ENCODE measurements at regions of chr4 and their contacts with region 1.

Region 1: GRCh38 chr4:36081185-36081584 is 163.1 kb downstream of the ARAP2 start:
- DNase-seq: no peak
- H3K4me3 ChIP-seq: no peak overlapping the region
- H3K27ac ChIP-seq: no peak overlapping the region
- H3K4me1 ChIP-seq: no peaks in the 10 kb centered on the region
- H3K27me3 ChIP-seq: no peaks in the 10 kb centered on the region
- CTCF ChIP-seq: no peak
- POLR2A ChIP-seq: no peak

Region 2: GRCh38 chr4:36414248-36414647 is 333.1 kb after region 1 on chr4:
- intact Hi-C with region 1: loop called (anchors 10 kb)
- DNase-seq: no peak
- H3K4me3 ChIP-seq: no peak overlapping the region
- H3K27ac ChIP-seq: no peak overlapping the region
- H3K4me1 ChIP-seq: no peaks in the 10 kb centered on the region
- H3K27me3 ChIP-seq: no peaks in the 10 kb centered on the region
- CTCF ChIP-seq: no peak
- POLR2A ChIP-seq: no peak

Measured in vagina (tissue), 2 donors.